Left colon (tissue), 2 donors: ENCODE measurements at regions of chr3 and their contacts with region 1.

Region 1: GRCh38 chr3:85821130-85821756 is 862.5 kb downstream of the CADM2 start:
- DNase-seq: peak in 1 of 2 donors; percentile 32
- ATAC-seq: peak; percentile 62

Region 2: GRCh38 chr3:86245360-86245759 is 424.1 kb after region 1 on chr3:
- intact Hi-C with region 1: loop called in 1 of 2 experiments (anchors 10 kb)
- DNase-seq: no peak
- ATAC-seq: peak; percentile 62